IMR-90 (cell line): ENCODE measurements at regions of chr10 and their contacts with region 1.

Region 1: GRCh38 chr10:9608602-9609001 is 1409.1 kb upstream of the CELF2 start:
- DNase-seq: peak; percentile 50
- ATAC-seq: peak; percentile 82
- H3K4me3 ChIP-seq: no peak overlapping the region
- H3K27ac ChIP-seq: no peak overlapping the region
- H3K4me1 ChIP-seq: 0 out of 2 replicates have a peak, but pooled peaks cover 1% of the 10 kb centered on the region
- H3K27me3 ChIP-seq: no peaks in the 10 kb centered on the region
- CTCF ChIP-seq: peak; percentile 82
- POLR2A ChIP-seq: no peak
- RAD21 ChIP-seq: peak; percentile 87

Region 2: GRCh38 chr10:9427209-9427608 is 181.4 kb before region 1 on chr10:
- CTCF ChIA-PET with region 1: no interaction called
- POLR2A ChIA-PET with region 1: no interaction called
- dilution Hi-C with region 1: no loop called
- in situ Hi-C with region 1: no loop called
- intact Hi-C with region 1: loop called (anchors 2 kb)
- DNase-seq: no peak
- ATAC-seq: peak; percentile 40; the same call in 1 of the 2 replicates
- H3K4me3 ChIP-seq: no peak overlapping the region
- H3K27ac ChIP-seq: no peak overlapping the region
- H3K4me1 ChIP-seq: no peaks in the 10 kb centered on the region
- H3K27me3 ChIP-seq: no peaks in the 10 kb centered on the region
- CTCF ChIP-seq: no peak
- POLR2A ChIP-seq: no peak
- RAD21 ChIP-seq: no peak

Region 3: GRCh38 chr10:9743639-9744038 is 135.0 kb after region 1 on chr10:
- CTCF ChIA-PET with region 1: no interaction called
- POLR2A ChIA-PET with region 1: no interaction called
- dilution Hi-C with region 1: no loop called
- in situ Hi-C with region 1: no loop called
- intact Hi-C with region 1: no loop called
- DNase-seq: peak; percentile 4
- ATAC-seq: peak; percentile 57
- H3K4me3 ChIP-seq: no peak overlapping the region
- H3K27ac ChIP-seq: no peak overlapping the region
- H3K4me1 ChIP-seq: no peaks in the 10 kb centered on the region; the same call in 1 of the 2 replicates
- H3K27me3 ChIP-seq: no peaks in the 10 kb centered on the region
- CTCF ChIP-seq: no peak
- POLR2A ChIP-seq: no peak
- RAD21 ChIP-seq: no peak

Region 4: GRCh38 chr10:10394933-10395656 is 786.5 kb after region 1 on chr10:
- CTCF ChIA-PET with region 1: no interaction called
- POLR2A ChIA-PET with region 1: no interaction called
- dilution Hi-C with region 1: no loop called
- in situ Hi-C with region 1: no loop called
- intact Hi-C with region 1: loop called (anchors 10 kb)
- DNase-seq: peak; percentile 67
- ATAC-seq: peak; percentile 82
- H3K4me3 ChIP-seq: no peak overlapping the region
- H3K27ac ChIP-seq: peak overlapping the region; percentile 68; the same call in 1 of the 2 replicates
- H3K4me1 ChIP-seq: peaks cover 5% of the 10 kb centered on the region
- H3K27me3 ChIP-seq: no peaks in the 10 kb centered on the region
- CTCF ChIP-seq: no peak
- POLR2A ChIP-seq: no peak
- RAD21 ChIP-seq: no peak

Region 5: GRCh38 chr10:10677479-10677878 is 1068.9 kb after region 1 on chr10:
- CTCF ChIA-PET with region 1: interaction called, 8 read pairs
- POLR2A ChIA-PET with region 1: no interaction called
- dilution Hi-C with region 1: no loop called
- in situ Hi-C with region 1: loop called (anchors 10 kb)
- intact Hi-C with region 1: loop called (anchors 1 kb)
- DNase-seq: peak; percentile 80
- ATAC-seq: peak; percentile 95
- H3K4me3 ChIP-seq: no peak overlapping the region
- H3K27ac ChIP-seq: no peak overlapping the region
- H3K4me1 ChIP-seq: no peaks in the 10 kb centered on the region
- H3K27me3 ChIP-seq: no peaks in the 10 kb centered on the region; the same call in 1 of the 2 replicates
- CTCF ChIP-seq: peak; percentile 66
- POLR2A ChIP-seq: no peak
- RAD21 ChIP-seq: peak; percentile 91

Region 6: GRCh38 chr10:10824591-10825148 is 1216.1 kb after region 1 on chr10:
- CTCF ChIA-PET with region 1: no interaction called
- POLR2A ChIA-PET with region 1: no interaction called
- dilution Hi-C with region 1: no loop called
- in situ Hi-C with region 1: loop called (anchors 25 kb)
- intact Hi-C with region 1: no loop called
- DNase-seq: peak; percentile 93
- ATAC-seq: peak; percentile 79
- H3K4me3 ChIP-seq: no peak overlapping the region
- H3K27ac ChIP-seq: peak overlapping the region; percentile 85
- H3K4me1 ChIP-seq: peaks cover 12% of the 10 kb centered on the region
- H3K27me3 ChIP-seq: no peaks in the 10 kb centered on the region
- CTCF ChIP-seq: no peak
- POLR2A ChIP-seq: no peak; the same call in 1 of the 2 replicates
- RAD21 ChIP-seq: 0 out of 2 replicates have a peak, but pooled peaks have one; percentile 6

Region 7: DNA sequence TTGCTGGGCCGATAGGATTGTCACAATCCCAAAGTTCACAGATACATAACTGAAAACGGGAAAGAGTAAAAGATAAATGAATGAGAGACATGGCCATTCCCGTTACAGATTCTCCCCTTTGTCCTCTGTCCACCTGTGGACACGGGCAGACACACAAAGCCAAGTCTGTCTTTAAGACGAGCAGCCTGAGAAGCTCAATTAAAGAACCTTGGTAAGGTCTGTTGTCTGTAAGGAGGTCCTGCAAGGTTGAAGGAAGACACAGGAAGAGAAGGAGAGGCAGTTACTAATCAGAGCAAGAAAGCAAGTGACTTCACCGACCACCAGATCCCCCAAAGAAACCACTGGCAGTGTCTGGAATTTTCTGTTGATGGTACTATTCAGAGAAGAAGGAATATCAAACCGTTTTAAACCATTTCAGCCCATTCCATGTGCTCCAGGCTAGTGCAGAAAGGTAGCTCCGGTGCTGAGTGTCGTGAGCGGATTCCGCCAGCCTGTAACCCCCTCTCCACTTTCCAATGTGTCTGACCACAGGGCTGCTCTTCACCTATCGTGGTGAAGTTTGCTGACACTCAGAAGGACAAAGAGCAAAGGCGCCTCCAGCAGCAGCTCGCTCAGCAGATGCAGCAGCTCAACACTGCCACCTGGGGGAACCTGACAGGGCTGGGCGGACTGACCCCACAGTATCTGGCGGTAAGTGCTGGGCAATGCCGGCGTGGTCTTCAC is 1661.7 kb after region 1 on chr10:
- CTCF ChIA-PET with region 1: no interaction called
- POLR2A ChIA-PET with region 1: no interaction called
- dilution Hi-C with region 1: no loop called
- in situ Hi-C with region 1: loop called (anchors 10 kb)
- intact Hi-C with region 1: loop called (anchors 5 kb)
- DNase-seq: peak; percentile 53
- ATAC-seq: peak; percentile 99
- H3K4me3 ChIP-seq: no peak overlapping the region
- H3K27ac ChIP-seq: no peak overlapping the region
- H3K4me1 ChIP-seq: no peaks in the 10 kb centered on the region
- H3K27me3 ChIP-seq: no peaks in the 10 kb centered on the region; the same call in 1 of the 2 replicates
- CTCF ChIP-seq: peak; percentile 73
- POLR2A ChIP-seq: no peak
- RAD21 ChIP-seq: peak; percentile 83